Activated T-helper 2 cell treated with anti-CD3 and anti-CD28 coated beads, Interferon-gamma antibody, Interleukin-2, Interleukin-4, amounts not matched to agents 10 μg/mL and 5 μg/mL and 100 μg/mL, durations not matched to agents 14 hours and 24 hours and 36 hours (primary cell): ENCODE measurements at regions of chr9 and their contacts with region 1.

Region 1: DNA sequence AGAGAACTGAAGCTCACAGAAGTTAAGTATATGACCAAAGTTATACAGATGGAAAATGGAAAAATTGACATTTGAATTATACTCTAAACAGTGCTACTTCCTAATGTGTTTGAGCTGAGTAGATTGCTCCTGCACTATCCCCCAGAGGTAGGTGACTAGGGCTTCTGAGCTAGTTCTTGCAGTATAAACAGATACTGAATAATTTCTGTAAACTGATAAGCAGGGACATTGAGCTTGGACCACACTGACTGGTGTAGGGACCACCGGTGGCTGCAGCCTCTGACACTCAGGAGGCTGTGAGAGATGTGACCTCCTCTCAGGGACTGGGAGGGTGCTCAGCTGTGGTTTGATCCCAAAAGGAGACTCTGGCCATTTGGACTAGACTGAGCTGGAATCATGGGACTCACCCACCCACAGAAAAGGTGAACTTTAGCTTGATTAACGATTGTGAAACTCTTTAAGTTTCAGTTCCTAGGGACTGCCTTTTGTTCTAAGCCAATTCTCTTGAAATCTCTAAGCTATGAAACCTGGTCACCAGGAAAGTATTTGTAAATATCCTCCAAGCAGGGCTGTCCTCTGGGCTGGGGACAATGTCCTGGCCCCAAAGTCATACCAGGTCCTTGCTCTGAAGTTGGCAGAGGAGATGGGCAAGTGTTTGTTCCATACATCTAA is 291.5 kb downstream of the SEC61B start:
- DNase-seq: no peak
- H3K4me3 Mint-ChIP-seq: no peak overlapping the region
- H3K27ac Mint-ChIP-seq: peak overlapping the region; percentile 64
- H3K4me1 Mint-ChIP-seq: peaks cover 28% of the 10 kb centered on the region
- H3K27me3 Mint-ChIP-seq: no peaks in the 10 kb centered on the region

Region 2: GRCh38 chr9:99474186-99474585 is 39.4 kb before region 1 on chr9:
- intact Hi-C with region 1: loop called (anchors 5 kb)
- DNase-seq: no peak
- H3K4me3 Mint-ChIP-seq: no peak overlapping the region
- H3K27ac Mint-ChIP-seq: no peak overlapping the region
- H3K4me1 Mint-ChIP-seq: peaks cover 33% of the 10 kb centered on the region
- H3K27me3 Mint-ChIP-seq: no peaks in the 10 kb centered on the region

Region 3: GRCh38 chr9:99555792-99556191 is 42.2 kb after region 1 on chr9:
- intact Hi-C with region 1: loop called (anchors 5 kb)
- DNase-seq: no peak
- H3K4me3 Mint-ChIP-seq: no peak overlapping the region
- H3K27ac Mint-ChIP-seq: peak overlapping the region; percentile 48
- H3K4me1 Mint-ChIP-seq: peaks cover 14% of the 10 kb centered on the region
- H3K27me3 Mint-ChIP-seq: peaks cover 2% of the 10 kb centered on the region

Region 4: GRCh38 chr9:99595796-99596195 is 82.2 kb after region 1 on chr9:
- intact Hi-C with region 1: loop called (anchors 5 kb)
- DNase-seq: no peak
- H3K4me3 Mint-ChIP-seq: no peak overlapping the region
- H3K27ac Mint-ChIP-seq: no peak overlapping the region
- H3K4me1 Mint-ChIP-seq: peaks cover 18% of the 10 kb centered on the region
- H3K27me3 Mint-ChIP-seq: peaks cover 3% of the 10 kb centered on the region

Region 5: GRCh38 chr9:99720455-99721050 is 207.0 kb after region 1 on chr9:
- intact Hi-C with region 1: loop called (anchors 5 kb)
- DNase-seq: no peak
- H3K4me3 Mint-ChIP-seq: peak overlapping the region; percentile 69
- H3K27ac Mint-ChIP-seq: peak overlapping the region; percentile 84
- H3K4me1 Mint-ChIP-seq: peaks cover 30% of the 10 kb centered on the region
- H3K27me3 Mint-ChIP-seq: no peaks in the 10 kb centered on the region